CD4-positive, alpha-beta T cell (primary cell): ENCODE measurements at regions of chr2 and their contacts with region 1.

Region 1: GRCh38 chr2:214180071-214180470 is 230.8 kb upstream of the VWC2L start:
- DNase-seq: no peak
- ATAC-seq: no peak
- H3K4me3 ChIP-seq: no peak overlapping the region
- H3K4me3 Mint-ChIP-seq: no peak overlapping the region
- H3K27ac ChIP-seq: no peak overlapping the region
- H3K27ac Mint-ChIP-seq: no peak overlapping the region
- H3K4me1 ChIP-seq: no peaks in the 10 kb centered on the region
- H3K4me1 Mint-ChIP-seq: no peaks in the 10 kb centered on the region
- H3K27me3 ChIP-seq: no peaks in the 10 kb centered on the region
- H3K27me3 Mint-ChIP-seq: no peaks in the 10 kb centered on the region
- CTCF ChIP-seq: no peak

Region 2: GRCh38 chr2:214127571-214127970 is 52.5 kb before region 1 on chr2:
- CTCF ChIA-PET with region 1: no interaction called
- POLR2A ChIA-PET with region 1: no interaction called
- intact Hi-C with region 1: no loop called
- DNase-seq: no peak
- ATAC-seq: no peak
- H3K4me3 ChIP-seq: no peak overlapping the region
- H3K4me3 Mint-ChIP-seq: no peak overlapping the region
- H3K27ac ChIP-seq: no peak overlapping the region
- H3K27ac Mint-ChIP-seq: no peak overlapping the region
- H3K4me1 ChIP-seq: no peaks in the 10 kb centered on the region
- H3K4me1 Mint-ChIP-seq: no peaks in the 10 kb centered on the region
- H3K27me3 ChIP-seq: no peaks in the 10 kb centered on the region
- H3K27me3 Mint-ChIP-seq: no peaks in the 10 kb centered on the region
- CTCF ChIP-seq: no peak

Region 3: GRCh38 chr2:215105608-215106354 is 925.7 kb after region 1 on chr2:
- CTCF ChIA-PET with region 1: no interaction called
- POLR2A ChIA-PET with region 1: no interaction called
- intact Hi-C with region 1: loop called in 1 of 2 experiments (anchors 5 kb)
- DNase-seq: no peak
- ATAC-seq: no peak
- H3K4me3 ChIP-seq: no peak overlapping the region
- H3K4me3 Mint-ChIP-seq: no peak overlapping the region
- H3K27ac ChIP-seq: no peak overlapping the region
- H3K27ac Mint-ChIP-seq: no peak overlapping the region
- H3K4me1 ChIP-seq: no peaks in the 10 kb centered on the region
- H3K4me1 Mint-ChIP-seq: no peaks in the 10 kb centered on the region
- H3K27me3 ChIP-seq: no peaks in the 10 kb centered on the region
- H3K27me3 Mint-ChIP-seq: no peaks in the 10 kb centered on the region
- CTCF ChIP-seq: no peak